ENCODE measurements at regions of chr18 and their contacts with region 1.

Region 1: DNA sequence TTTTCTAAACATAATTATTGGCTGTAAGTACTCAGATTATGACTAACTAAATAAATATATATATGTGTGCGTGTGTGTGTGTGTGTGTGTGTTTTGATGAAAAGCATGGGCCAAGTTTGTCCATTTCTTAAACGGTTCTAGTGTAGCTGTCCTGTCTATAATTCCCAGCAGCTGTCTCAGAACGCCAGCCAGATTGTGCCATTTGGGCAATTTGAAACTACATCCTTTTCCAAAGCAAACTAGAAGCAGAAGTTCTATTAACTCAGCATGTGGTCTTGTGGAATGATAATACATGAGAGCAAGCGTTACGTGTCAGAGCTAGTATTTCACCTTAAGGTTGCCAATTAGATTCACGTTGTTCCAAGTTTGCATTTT is 1.7 kb downstream of the ARHGAP28 start:
- DNase-seq: peak; percentile 89
- H3K4me3 ChIP-seq: peak overlapping the region; percentile 72
- H3K27ac ChIP-seq: peak overlapping the region; percentile 11
- H3K27me3 ChIP-seq: no peaks in the 10 kb centered on the region
- CTCF ChIP-seq: no peak

Region 2: DNA sequence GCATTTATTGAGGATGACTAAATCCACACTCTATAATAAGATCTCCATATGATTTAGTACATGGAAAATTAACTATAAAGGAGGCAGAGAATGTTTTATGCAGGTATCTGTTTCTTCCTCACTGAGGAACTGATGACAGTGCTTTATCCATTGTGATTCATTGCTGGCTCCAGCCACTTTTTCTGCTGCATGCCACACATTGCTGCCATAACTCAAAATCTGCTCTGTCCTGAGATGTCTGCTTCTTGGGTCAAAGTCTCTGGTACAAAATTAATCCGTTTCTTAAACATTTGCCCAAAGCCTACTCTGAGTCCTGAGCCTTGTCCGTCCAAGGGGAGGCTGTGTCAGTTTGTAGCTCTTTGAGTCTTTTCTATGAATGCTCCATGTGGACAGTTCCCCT is 17.2 kb before region 1 on chr18:
- CTCF ChIA-PET with region 1: no interaction called
- POLR2A ChIA-PET with region 1: no interaction called
- DNase-seq: no peak
- H3K4me3 ChIP-seq: no peak overlapping the region
- H3K27ac ChIP-seq: no peak overlapping the region
- H3K27me3 ChIP-seq: no peaks in the 10 kb centered on the region
- CTCF ChIP-seq: no peak

Region 3: DNA sequence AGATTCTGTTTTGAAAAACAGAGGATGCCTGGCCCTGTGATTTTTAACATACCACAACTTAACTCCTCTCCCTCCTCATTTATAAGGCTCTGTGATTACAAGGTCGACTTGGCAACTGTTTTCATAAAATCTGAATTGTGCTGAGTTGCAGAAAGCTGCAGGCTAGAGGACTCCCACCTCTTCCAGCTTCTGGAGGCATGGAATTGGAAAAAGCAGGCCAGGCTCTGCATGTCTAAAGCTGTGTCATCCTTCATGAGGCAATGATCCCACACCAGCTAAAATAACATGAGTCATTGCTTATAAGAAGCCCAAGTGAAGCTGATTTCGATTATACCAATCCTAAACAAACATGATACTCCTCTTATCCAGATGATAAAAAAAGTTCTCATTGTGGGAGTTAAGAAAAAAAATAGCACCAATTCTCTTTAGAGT is 10.0 kb after region 1 on chr18:
- CTCF ChIA-PET with region 1: interaction called, 6 read pairs
- POLR2A ChIA-PET with region 1: interaction called, 22 read pairs
- DNase-seq: peak; percentile 95
- H3K4me3 ChIP-seq: no peak overlapping the region
- H3K27ac ChIP-seq: peak overlapping the region; percentile 77
- H3K27me3 ChIP-seq: no peaks in the 10 kb centered on the region
- CTCF ChIP-seq: no peak

Region 4: GRCh38 chr18:6857300-6857699 is 126.1 kb after region 1 on chr18:
- CTCF ChIA-PET with region 1: no interaction called
- POLR2A ChIA-PET with region 1: interaction called, 12 read pairs
- DNase-seq: peak; percentile 64
- H3K4me3 ChIP-seq: no peak overlapping the region
- H3K27ac ChIP-seq: peak overlapping the region; percentile 47
- H3K27me3 ChIP-seq: no peaks in the 10 kb centered on the region
- CTCF ChIP-seq: peak; percentile 16; the same call in 1 of the 2 replicates

Measured in AG04450 (cell line).